Activated B cell treated with CpG ODN at 0.5 μM for 24 hours (primary cell): ENCODE measurements at regions of chr20 and their contacts with region 1.

Region 1: DNA sequence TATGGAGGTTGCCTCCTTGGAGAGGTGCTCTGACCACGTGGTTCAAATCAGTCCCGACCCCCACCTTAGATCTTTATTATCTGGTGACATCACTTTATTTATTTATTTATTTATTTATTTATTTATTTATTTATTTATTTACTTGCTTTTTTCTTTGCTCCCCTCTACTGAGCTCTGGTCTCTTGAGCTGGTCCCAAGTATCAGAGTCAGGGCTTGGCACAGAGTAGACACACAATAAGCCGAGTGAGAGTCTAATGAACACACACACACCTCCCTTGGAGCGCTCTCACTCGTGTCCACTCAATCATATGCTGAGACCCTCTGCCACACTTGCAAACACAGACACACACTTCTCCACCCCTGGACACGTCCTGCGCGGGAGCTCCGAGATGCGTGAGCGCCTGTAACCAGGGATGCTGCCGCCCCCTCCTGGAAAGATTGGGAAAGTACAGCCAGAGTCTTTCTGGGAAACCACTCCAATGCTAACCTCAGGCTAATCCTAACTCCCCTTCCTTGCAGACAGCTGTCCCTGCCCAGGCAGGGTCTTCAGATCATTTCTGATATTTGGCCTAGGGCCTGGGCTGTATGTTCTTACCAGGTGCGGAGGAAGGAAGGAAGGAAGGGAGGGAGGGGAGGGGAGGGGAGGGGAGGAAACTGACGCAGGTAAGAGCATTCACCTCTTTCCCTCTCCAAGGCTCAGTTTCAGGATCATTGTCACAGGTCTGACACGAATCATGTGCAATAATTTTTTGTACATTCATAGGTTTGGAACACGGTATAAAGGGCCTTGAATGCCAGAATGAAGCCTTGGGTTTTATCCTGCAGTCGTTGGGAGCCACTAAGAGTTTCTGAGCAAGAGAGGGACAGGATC is 70.9 kb downstream of the STK35 start:
- DNase-seq: peak; percentile 53
- ATAC-seq: peak; percentile 83
- H3K4me3 Mint-ChIP-seq: no peak overlapping the region
- H3K27ac Mint-ChIP-seq: no peak overlapping the region
- H3K4me1 Mint-ChIP-seq: peaks cover 4% of the 10 kb centered on the region
- H3K27me3 Mint-ChIP-seq: peaks cover 11% of the 10 kb centered on the region
- CTCF ChIP-seq: no peak

Region 2: GRCh38 chr20:1764136-1765033 is 408.2 kb before region 1 on chr20:
- CTCF ChIA-PET with region 1: interaction called, 62 read pairs
- POLR2A ChIA-PET with region 1: no interaction called
- intact Hi-C with region 1: loop called (anchors 1 kb)
- DNase-seq: peak; percentile 46
- ATAC-seq: peak; percentile 86
- H3K4me3 Mint-ChIP-seq: no peak overlapping the region
- H3K27ac Mint-ChIP-seq: no peak overlapping the region
- H3K4me1 Mint-ChIP-seq: peaks cover 2% of the 10 kb centered on the region
- H3K27me3 Mint-ChIP-seq: peaks cover 5% of the 10 kb centered on the region
- CTCF ChIP-seq: peak; percentile 45

Region 3: GRCh38 chr20:1894951-1895673 is 277.4 kb before region 1 on chr20 and contains the start of gene SIRPA:
- CTCF ChIA-PET with region 1: no interaction called
- POLR2A ChIA-PET with region 1: no interaction called
- intact Hi-C with region 1: loop called (anchors 5 kb)
- DNase-seq: no peak
- ATAC-seq: peak; percentile 7
- H3K4me3 Mint-ChIP-seq: peak within 1 kb of the TSS; percentile 83
- H3K27ac Mint-ChIP-seq: peak within 1 kb of the TSS; percentile 79
- H3K4me1 Mint-ChIP-seq: peaks cover 56% of the 10 kb centered on the region
- H3K27me3 Mint-ChIP-seq: no peaks in the 10 kb centered on the region
- CTCF ChIP-seq: no peak
- total RNA-seq, gene SIRPA: 10.1 and 10.2 TPM in 2 replicates

Region 4: GRCh38 chr20:2005831-2006426 is 166.6 kb before region 1 on chr20:
- CTCF ChIA-PET with region 1: interaction called, 8 read pairs
- POLR2A ChIA-PET with region 1: no interaction called
- intact Hi-C with region 1: loop called (anchors 1 kb)
- DNase-seq: peak; percentile 40
- ATAC-seq: peak; percentile 56
- H3K4me3 Mint-ChIP-seq: no peak overlapping the region
- H3K27ac Mint-ChIP-seq: no peak overlapping the region
- H3K4me1 Mint-ChIP-seq: no peaks in the 10 kb centered on the region
- H3K27me3 Mint-ChIP-seq: peaks cover 35% of the 10 kb centered on the region
- CTCF ChIP-seq: no peak

Region 5: DNA sequence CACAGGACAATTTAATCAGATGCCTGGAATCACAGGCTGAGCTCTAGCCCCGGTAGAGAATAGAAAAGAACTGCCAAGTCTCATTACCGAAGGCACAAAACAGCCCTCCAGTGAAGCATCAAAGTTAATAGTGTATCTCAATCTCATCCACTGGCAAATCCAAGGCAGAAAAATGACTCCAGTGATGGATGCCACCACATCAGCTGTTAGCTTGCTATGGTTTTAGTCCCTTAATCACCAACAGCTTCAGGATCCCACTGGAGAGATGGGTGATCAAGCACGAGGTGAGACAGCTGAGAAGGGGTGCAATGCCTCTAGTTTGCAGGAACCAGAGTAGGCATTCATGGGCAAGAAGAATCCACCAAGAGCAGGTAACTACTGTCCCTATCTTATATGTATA is 10.8 kb after region 1 on chr20:
- CTCF ChIA-PET with region 1: interaction called, 12 read pairs
- POLR2A ChIA-PET with region 1: no interaction called
- intact Hi-C with region 1: no loop called
- DNase-seq: no peak
- ATAC-seq: no peak
- H3K4me3 Mint-ChIP-seq: no peak overlapping the region
- H3K27ac Mint-ChIP-seq: no peak overlapping the region
- H3K4me1 Mint-ChIP-seq: peaks cover 4% of the 10 kb centered on the region
- H3K27me3 Mint-ChIP-seq: peaks cover 10% of the 10 kb centered on the region
- CTCF ChIP-seq: no peak

Region 6: DNA sequence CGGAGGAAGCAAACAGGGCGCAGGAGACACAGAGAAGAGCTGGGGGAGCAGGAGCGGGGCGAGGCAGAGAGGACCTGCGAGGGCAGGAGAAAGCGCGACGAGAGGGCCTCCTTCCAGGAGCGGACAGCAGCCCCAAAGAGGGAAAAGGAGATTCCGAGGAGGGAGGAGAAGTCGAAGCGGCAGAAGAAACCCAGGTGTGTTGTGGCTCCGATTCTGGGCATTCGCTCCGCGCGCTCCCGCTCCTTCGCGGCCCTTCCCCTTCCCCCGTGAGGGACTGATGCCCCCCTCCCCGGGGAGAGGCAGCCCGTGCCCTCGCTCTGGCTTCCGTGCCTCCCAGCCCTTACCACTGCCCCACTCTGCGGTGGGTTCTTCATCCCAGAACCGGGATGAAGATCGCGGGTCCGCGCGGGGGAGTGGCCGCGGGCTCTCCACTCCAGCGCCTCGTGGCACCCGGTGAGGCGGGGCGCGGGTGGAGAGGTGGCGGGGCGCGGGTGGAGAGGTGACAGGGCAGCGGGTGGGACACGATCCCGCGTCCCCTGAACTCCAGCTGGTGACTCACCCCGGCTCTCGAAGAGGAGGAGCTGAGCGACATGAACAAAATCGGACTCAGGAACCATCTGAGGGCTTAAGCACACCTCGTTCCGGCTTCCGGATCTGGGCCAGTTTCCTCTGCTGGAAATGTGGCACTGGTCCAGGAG is 386.2 kb after region 1 on chr20:
- CTCF ChIA-PET with region 1: no interaction called
- POLR2A ChIA-PET with region 1: no interaction called
- intact Hi-C with region 1: no loop called
- DNase-seq: no peak
- ATAC-seq: no peak
- H3K4me3 Mint-ChIP-seq: no peak overlapping the region
- H3K27ac Mint-ChIP-seq: no peak overlapping the region
- H3K4me1 Mint-ChIP-seq: no peaks in the 10 kb centered on the region
- H3K27me3 Mint-ChIP-seq: peaks cover 48% of the 10 kb centered on the region
- CTCF ChIP-seq: no peak